ENCODE measurements at regions of chr17 and their contacts with region 1.

Region 1: GRCh38 chr17:16129441-16130205 is 85.7 kb downstream of the NCOR1 start:
- DNase-seq: no peak
- H3K4me3 ChIP-seq: no peak overlapping the region
- H3K4me1 ChIP-seq: no peaks in the 10 kb centered on the region
- H3K27me3 ChIP-seq: no peaks in the 10 kb centered on the region

Region 2: GRCh38 chr17:15944759-15945529 is 184.7 kb before region 1 on chr17 and contains the start of gene ADORA2B:
- in situ Hi-C with region 1: no loop called
- DNase-seq: peak; percentile 46 to 78
- H3K4me3 ChIP-seq: peak within 1 kb of the TSS; percentile 57
- H3K4me1 ChIP-seq: peaks cover 10% of the 10 kb centered on the region
- H3K27me3 ChIP-seq: no peaks in the 10 kb centered on the region

Region 3: GRCh38 chr17:16052486-16052885 is 77.1 kb before region 1 on chr17:
- in situ Hi-C with region 1: loop called (anchors 10 kb)
- DNase-seq: no peak
- H3K4me3 ChIP-seq: no peak overlapping the region
- H3K4me1 ChIP-seq: no peaks in the 10 kb centered on the region
- H3K27me3 ChIP-seq: no peaks in the 10 kb centered on the region

Region 4: GRCh38 chr17:16189791-16190348 is 60.2 kb after region 1 on chr17:
- in situ Hi-C with region 1: no loop called
- DNase-seq: no peak
- H3K4me3 ChIP-seq: no peak overlapping the region
- H3K4me1 ChIP-seq: no peaks in the 10 kb centered on the region
- H3K27me3 ChIP-seq: no peaks in the 10 kb centered on the region

Measured in HAP-1 (cell line).